Activated CD4-positive, alpha-beta memory T cell treated with anti-CD3 and anti-CD28 coated beads for 36 hours (primary cell): ENCODE measurements at regions of chr3 and their contacts with region 1.

Region 1: DNA sequence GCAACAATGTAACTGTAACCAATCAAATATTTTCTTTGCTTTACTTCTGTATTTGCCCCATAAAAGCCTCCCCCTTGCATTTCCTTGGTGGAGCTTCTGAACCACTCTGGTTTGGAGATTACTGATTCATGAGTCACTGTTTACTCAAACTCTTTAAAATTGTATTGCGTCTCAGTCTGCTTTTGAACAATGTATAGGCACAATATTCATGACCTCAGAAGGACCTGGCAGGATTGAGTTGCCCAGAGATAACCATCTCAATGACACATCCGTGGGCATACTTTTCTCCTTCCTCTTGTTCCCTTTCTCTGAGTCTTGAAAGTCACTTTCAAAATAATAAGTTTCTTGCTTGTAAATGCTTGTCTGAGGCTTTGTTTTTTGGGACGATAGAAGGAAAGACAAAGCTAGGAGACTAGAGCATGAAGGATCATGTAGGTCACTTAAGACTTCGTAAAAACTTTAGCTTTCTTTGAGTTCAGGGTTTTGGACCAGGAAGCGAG is 57.1 kb upstream of the POU1F1 start:
- DNase-seq: peak; percentile 62
- H3K4me3 Mint-ChIP-seq: no peak overlapping the region
- H3K27ac Mint-ChIP-seq: peak overlapping the region; percentile 87
- H3K4me1 Mint-ChIP-seq: peaks cover 21% of the 10 kb centered on the region
- H3K27me3 Mint-ChIP-seq: peaks cover 2% of the 10 kb centered on the region

Region 2: DNA sequence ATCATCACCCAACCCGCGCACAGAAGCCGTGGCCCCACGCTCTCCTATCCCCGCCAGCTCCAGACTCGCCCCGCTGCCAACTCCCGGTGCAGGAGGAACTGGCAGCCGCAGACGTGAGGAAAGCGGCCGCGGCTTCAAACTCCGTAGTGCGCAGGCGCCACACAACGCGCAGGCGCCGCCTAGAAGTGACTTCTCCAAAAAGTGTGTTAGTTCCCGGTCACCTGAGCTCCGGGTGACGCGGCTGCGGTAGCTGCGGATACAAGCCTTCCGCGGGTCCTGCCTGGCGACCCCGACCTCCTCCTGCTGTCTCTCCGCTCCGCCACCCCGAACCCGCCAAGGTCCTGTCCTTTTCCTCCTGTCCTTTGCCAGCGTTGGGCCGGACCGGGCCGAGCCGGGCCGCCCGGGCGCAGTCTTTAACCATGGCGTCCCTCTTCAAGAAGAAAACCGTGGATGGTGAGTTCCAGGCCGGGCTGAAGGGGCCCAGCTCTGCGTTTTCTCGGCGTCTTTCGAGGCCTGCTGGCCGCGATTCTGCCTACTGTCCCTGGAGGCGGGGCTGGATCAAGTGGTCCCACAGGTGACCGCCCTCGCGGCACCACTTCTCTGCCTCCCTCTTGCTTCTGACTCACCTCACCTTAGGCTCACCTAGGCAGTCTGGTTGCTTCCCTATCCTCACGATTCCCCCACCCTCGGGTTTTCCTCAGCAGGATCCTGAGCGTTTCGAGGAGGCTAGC is 106.2 kb before region 1 on chr3 and contains the start of gene CHMP2B:
- CTCF ChIA-PET with region 1: no interaction called
- POLR2A ChIA-PET with region 1: no interaction called
- intact Hi-C with region 1: loop called (anchors 1 kb)
- DNase-seq: peak; percentile 94
- H3K4me3 Mint-ChIP-seq: peak within 1 kb of the TSS; percentile 89
- H3K27ac Mint-ChIP-seq: peak within 1 kb of the TSS; percentile 89
- H3K4me1 Mint-ChIP-seq: peaks cover 33% of the 10 kb centered on the region
- H3K27me3 Mint-ChIP-seq: peaks cover 3% of the 10 kb centered on the region
- total RNA-seq, gene CHMP2B: 28.4 to 29.0 TPM

Region 3: DNA sequence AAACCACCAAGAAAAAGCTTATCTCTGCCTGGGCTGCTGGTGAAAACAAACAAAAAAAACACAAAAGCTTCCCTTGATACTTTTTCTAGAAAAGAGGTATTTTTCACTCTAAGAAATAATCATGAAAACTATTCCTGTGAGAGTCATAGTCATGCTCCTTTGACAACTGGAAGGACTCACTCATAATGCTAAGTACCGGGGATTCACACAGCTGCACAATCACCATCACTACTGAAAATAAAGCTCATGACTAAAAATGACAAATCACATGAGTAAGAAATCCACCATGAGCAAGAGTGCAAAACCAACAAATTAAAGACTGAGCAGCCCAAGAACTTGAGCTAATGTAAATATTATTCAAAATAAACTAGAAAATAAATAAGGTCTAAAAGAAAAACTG is 46.4 kb before region 1 on chr3:
- CTCF ChIA-PET with region 1: no interaction called
- POLR2A ChIA-PET with region 1: interaction called, 5 read pairs
- intact Hi-C with region 1: loop called (anchors 1 kb)
- DNase-seq: no peak
- H3K4me3 Mint-ChIP-seq: no peak overlapping the region
- H3K27ac Mint-ChIP-seq: no peak overlapping the region
- H3K4me1 Mint-ChIP-seq: peaks cover 3% of the 10 kb centered on the region
- H3K27me3 Mint-ChIP-seq: peaks cover 5% of the 10 kb centered on the region

Region 4: DNA sequence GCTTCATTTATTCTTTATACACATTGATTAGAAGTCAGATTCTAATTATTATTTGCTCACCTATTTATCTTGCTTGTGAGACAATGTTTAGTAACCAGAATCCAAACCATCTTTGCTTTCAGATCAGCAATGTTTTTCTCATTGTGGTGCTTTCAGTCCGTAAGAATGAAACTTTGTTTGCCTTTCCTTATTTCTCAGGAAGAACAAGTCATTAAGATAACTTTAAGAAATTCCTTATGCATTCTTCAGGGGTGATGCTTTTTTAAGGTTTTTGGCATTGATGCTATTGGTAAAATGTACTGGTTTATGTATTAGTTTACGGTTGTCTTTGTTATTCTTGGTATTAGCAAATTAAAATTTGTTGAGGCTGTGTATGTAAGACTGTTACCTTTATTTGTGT is 63.8 kb after region 1 on chr3:
- CTCF ChIA-PET with region 1: no interaction called
- POLR2A ChIA-PET with region 1: no interaction called
- intact Hi-C with region 1: no loop called
- DNase-seq: no peak
- H3K4me3 Mint-ChIP-seq: no peak overlapping the region
- H3K27ac Mint-ChIP-seq: no peak overlapping the region
- H3K4me1 Mint-ChIP-seq: no peaks in the 10 kb centered on the region
- H3K27me3 Mint-ChIP-seq: peaks cover 1% of the 10 kb centered on the region

Region 5: GRCh38 chr3:87437765-87438164 is 104.3 kb after region 1 on chr3:
- CTCF ChIA-PET with region 1: no interaction called
- POLR2A ChIA-PET with region 1: no interaction called
- intact Hi-C with region 1: loop called (anchors 5 kb)
- DNase-seq: no peak
- H3K4me3 Mint-ChIP-seq: no peak overlapping the region
- H3K27ac Mint-ChIP-seq: no peak overlapping the region
- H3K4me1 Mint-ChIP-seq: no peaks in the 10 kb centered on the region
- H3K27me3 Mint-ChIP-seq: no peaks in the 10 kb centered on the region

Region 6: DNA sequence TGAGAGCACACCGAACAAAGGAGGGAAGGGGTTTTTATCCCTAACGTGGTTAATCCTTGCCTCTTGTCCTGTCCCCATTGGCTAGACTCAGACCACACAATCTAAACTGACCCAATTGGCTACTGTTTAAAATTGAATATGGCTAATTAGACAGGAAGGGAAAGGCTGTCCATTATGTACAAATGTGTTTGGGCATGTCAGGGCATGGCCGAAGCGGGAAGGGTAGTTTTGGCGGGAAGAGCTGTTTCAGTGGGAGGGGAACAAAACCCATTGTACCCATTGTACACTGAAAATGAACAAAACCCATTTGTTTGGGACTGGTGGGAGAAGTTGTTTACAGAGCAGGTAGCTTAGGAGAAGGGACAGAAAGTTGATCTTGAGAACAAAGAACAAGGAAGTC is 273.8 kb after region 1 on chr3:
- CTCF ChIA-PET with region 1: no interaction called
- POLR2A ChIA-PET with region 1: no interaction called
- intact Hi-C with region 1: no loop called
- DNase-seq: no peak
- H3K4me3 Mint-ChIP-seq: no peak overlapping the region
- H3K27ac Mint-ChIP-seq: no peak overlapping the region
- H3K4me1 Mint-ChIP-seq: no peaks in the 10 kb centered on the region
- H3K27me3 Mint-ChIP-seq: no peaks in the 10 kb centered on the region

Region 7: GRCh38 chr3:88149509-88150362 is 816.3 kb after region 1 on chr3 and contains the start of gene C3orf38:
- CTCF ChIA-PET with region 1: no interaction called
- POLR2A ChIA-PET with region 1: no interaction called
- intact Hi-C with region 1: loop called (anchors 1 kb)
- DNase-seq: peak; percentile 84
- H3K4me3 Mint-ChIP-seq: peak within 1 kb of the TSS; percentile 96
- H3K27ac Mint-ChIP-seq: peak within 1 kb of the TSS; percentile 99
- H3K4me1 Mint-ChIP-seq: peaks cover 30% of the 10 kb centered on the region
- H3K27me3 Mint-ChIP-seq: no peaks in the 10 kb centered on the region
- total RNA-seq, gene C3orf38: 25.1 to 25.8 TPM